CD4-positive, alpha-beta memory T cell (primary cell): ENCODE measurements at regions of chr6 and their contacts with region 1.

Region 1: GRCh38 chr6:34656378-34657036 is 40.1 kb downstream of the ILRUN start:
- DNase-seq: peak; percentile 26 to 72 (median 33)
- H3K4me3 ChIP-seq: peak overlapping the region; percentile 34 to 37
- H3K4me3 Mint-ChIP-seq: peak overlapping the region; percentile 83 to 96 (median 89)
- H3K27ac ChIP-seq: peak overlapping the region; percentile 67
- H3K27ac Mint-ChIP-seq: peak overlapping the region; percentile 90 to 98 (median 94)
- H3K4me1 ChIP-seq: peaks cover 73% of the 10 kb centered on the region
- H3K4me1 Mint-ChIP-seq: peaks cover 34 to 65% (median 50%) of the 10 kb centered on the region in 4 donors
- H3K27me3 ChIP-seq: no peaks in the 10 kb centered on the region
- H3K27me3 Mint-ChIP-seq: no peaks in the 10 kb centered on the region

Region 2: DNA sequence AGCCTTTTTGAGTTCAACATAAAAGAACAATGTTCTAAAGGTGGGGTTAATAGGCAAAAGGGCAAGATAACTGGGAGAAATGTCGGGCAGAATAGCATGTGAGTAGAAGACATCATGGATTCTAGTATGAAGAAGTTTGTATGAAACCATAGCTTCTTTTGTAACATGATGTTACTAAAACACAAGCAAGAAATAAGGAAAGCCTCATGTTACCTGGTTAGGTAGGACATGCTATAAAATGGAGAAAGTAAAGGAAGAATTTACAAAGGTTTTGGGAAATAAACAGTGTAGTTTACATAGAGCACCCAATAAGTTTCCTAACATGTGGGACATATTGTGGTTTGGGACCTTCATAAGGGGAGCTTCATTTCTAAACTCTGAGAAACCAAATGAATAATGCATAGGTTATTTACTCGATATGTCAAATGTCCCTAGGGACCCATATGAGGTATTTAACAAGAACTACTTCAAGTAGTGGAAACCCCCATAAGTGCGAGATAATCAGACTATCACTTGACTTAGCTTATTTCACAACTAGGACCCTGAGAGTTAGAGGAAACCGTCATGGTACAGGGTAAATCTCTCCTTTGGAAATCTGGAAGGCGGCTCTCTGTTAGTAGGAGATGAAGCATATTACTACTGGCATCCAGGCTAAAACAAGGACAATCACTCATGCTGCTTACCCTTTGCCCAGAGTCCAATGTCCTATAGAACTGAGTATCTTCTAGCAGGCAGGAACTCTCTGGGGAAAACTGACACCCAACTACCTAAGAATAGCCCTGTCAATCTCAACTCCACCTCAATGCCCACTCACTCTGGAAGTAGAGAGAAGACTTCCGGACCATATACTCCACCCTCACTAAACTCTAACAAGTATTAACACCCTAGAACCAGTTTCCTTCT is 17.4 kb before region 1 on chr6:
- CTCF ChIA-PET with region 1: interaction called, 11 read pairs
- POLR2A ChIA-PET with region 1: no interaction called
- intact Hi-C with region 1: no loop called
- DNase-seq: no peak
- H3K4me3 ChIP-seq: no peak overlapping the region
- H3K4me3 Mint-ChIP-seq: no peak overlapping the region
- H3K27ac ChIP-seq: no peak overlapping the region
- H3K27ac Mint-ChIP-seq: peak overlapping the region in 5 of 7 donors; percentile 26 to 87 (median 46)
- H3K4me1 ChIP-seq: peaks cover 3% of the 10 kb centered on the region
- H3K4me1 Mint-ChIP-seq: peaks cover 5 to 23% (median 14%) of the 10 kb centered on the region in 4 donors
- H3K27me3 ChIP-seq: no peaks in the 10 kb centered on the region
- H3K27me3 Mint-ChIP-seq: no peaks in the 10 kb centered on the region